ENCODE measurements at regions of chr2 and their contacts with region 1.

Region 1: GRCh38 chr2:111887819-111888223 is 3.8 kb upstream of the ANAPC1 start:
- DNase-seq: no peak
- H3K4me3 ChIP-seq: no peak overlapping the region
- H3K27ac ChIP-seq: no peak overlapping the region
- H3K4me1 ChIP-seq: peaks cover 8 to 20% (median 14%) of the 10 kb centered on the region in 4 donors
- H3K27me3 ChIP-seq: no peaks in the 10 kb centered on the region
- CTCF ChIP-seq: peak; percentile 55 to 69 (median 66)
- EP300 ChIP-seq: no peak
- POLR2A ChIP-seq: no peak

Region 2: GRCh38 chr2:112047537-112048235 is 159.9 kb after region 1 on chr2:
- intact Hi-C with region 1: loop called (anchors 2 kb)
- DNase-seq: no peak
- H3K4me3 ChIP-seq: no peak overlapping the region
- H3K27ac ChIP-seq: no peak overlapping the region
- H3K4me1 ChIP-seq: peaks cover 0 to 11% (median 7%) of the 10 kb centered on the region in 4 donors
- H3K27me3 ChIP-seq: no peaks in the 10 kb centered on the region
- CTCF ChIP-seq: no peak
- EP300 ChIP-seq: no peak
- POLR2A ChIP-seq: no peak